HepG2 (cell line): ENCODE measurements at regions of chr15 and their contacts with region 1.

Region 1: GRCh38 chr15:37045859-37046740 is 54.2 kb downstream of the MEIS2 start:
- DNase-seq: peak; percentile 56
- ATAC-seq: peak; percentile 96
- H3K4me3 ChIP-seq: peak overlapping the region in 2 of 3 experiments; percentile 22 to 30; a peak in 2 of 6 replicates
- H3K27ac ChIP-seq: peak overlapping the region; percentile 44
- H3K4me1 ChIP-seq: peaks cover 51% of the 10 kb centered on the region
- H3K27me3 ChIP-seq: no peaks in the 10 kb centered on the region
- CTCF ChIP-seq: no peak
- EP300 ChIP-seq: no peak
- POLR2A ChIP-seq: no peak
- RAD21 ChIP-seq: no peak

Region 2: DNA sequence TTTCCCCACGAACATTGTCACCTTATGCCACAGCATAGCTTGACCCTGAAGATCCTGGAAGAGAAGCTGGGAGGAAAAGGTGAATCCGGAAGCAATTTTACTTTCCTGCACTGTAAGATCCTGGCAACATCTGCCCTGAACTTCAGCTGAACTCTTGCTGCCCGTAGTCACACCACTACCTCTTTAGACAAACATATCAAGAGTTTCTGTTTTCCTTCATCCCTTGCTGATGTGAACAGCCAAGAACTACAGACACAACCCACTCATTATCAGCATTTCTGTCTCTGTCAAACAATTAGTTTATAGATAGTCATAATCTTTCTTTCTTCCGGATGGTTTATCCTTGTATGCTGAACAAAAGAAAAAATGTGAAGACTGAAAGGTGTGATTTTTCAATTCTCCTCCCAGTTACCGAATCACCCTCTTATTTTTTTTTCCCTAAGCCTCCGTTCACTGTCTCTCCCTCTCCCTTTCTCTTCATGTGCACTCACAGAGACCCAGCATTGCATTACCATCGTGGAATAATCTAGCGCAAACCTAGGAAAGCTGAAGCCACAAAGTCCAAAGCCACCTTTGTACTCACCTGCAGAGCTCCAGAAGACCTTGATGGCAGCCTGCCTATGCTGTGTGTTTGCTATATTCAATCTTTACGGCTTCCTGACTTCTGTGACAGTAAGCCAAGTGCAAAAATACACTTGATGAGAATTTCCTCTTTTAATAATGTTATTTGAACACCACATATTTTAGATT is 237.5 kb before region 1 on chr15:
- CTCF ChIA-PET with region 1: no interaction called
- POLR2A ChIA-PET with region 1: no interaction called
- in situ Hi-C with region 1: no loop called
- intact Hi-C with region 1: no loop called
- DNase-seq: peak; percentile 3
- ATAC-seq: no peak
- H3K4me3 ChIP-seq: no peak overlapping the region
- H3K27ac ChIP-seq: no peak overlapping the region
- H3K4me1 ChIP-seq: no peaks in the 10 kb centered on the region
- H3K27me3 ChIP-seq: no peaks in the 10 kb centered on the region
- CTCF ChIP-seq: no peak
- EP300 ChIP-seq: no peak
- POLR2A ChIP-seq: no peak
- RAD21 ChIP-seq: no peak

Region 3: DNA sequence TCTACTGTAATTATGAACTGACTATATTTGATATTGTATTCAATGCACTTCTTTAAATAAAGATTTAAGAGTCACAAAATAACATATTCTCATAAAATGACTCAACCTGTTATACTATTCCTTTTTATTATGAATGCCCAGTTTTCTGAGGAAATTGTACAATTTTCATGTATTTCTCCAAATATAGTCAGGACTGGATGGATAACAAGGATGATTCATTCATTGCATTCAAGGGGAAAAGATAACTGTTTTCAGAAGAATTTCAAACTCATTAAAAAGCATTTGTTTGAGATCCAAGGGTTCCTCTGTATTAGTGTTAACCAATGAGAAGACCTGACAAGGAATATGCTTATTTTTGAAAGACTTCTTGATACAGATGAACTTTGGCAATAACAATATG is 109.5 kb before region 1 on chr15:
- CTCF ChIA-PET with region 1: no interaction called
- POLR2A ChIA-PET with region 1: no interaction called
- in situ Hi-C with region 1: no loop called
- intact Hi-C with region 1: loop called (anchors 10 kb)
- DNase-seq: no peak
- ATAC-seq: no peak
- H3K4me3 ChIP-seq: no peak overlapping the region
- H3K27ac ChIP-seq: no peak overlapping the region
- H3K4me1 ChIP-seq: peaks cover 31% of the 10 kb centered on the region
- H3K27me3 ChIP-seq: no peaks in the 10 kb centered on the region
- CTCF ChIP-seq: no peak
- EP300 ChIP-seq: no peak
- POLR2A ChIP-seq: no peak
- RAD21 ChIP-seq: no peak

Region 4: DNA sequence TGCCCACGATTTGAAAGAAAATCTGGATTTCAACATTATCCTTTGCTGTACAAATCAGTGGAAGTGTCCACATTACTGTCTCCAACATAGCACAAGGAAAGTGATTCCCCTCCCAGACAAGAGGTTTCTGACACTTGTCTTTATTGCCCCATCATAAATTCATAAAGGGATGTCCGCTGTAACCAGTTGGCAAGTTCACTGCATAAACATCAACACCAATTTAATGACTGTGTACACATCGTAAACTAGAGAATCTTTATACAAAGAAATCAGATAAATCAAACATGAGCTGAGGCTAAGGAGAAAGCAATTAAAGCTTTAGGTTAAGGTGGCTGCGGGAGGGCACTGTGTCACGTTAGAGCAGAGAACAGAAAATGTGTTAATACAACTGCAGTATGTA is 75.6 kb before region 1 on chr15:
- CTCF ChIA-PET with region 1: no interaction called
- POLR2A ChIA-PET with region 1: no interaction called
- in situ Hi-C with region 1: no loop called
- intact Hi-C with region 1: loop called (anchors 10 kb)
- DNase-seq: no peak
- ATAC-seq: no peak
- H3K4me3 ChIP-seq: no peak overlapping the region
- H3K27ac ChIP-seq: no peak overlapping the region
- H3K4me1 ChIP-seq: no peaks in the 10 kb centered on the region
- H3K27me3 ChIP-seq: no peaks in the 10 kb centered on the region
- CTCF ChIP-seq: no peak
- EP300 ChIP-seq: no peak
- POLR2A ChIP-seq: no peak
- RAD21 ChIP-seq: no peak

Region 5: DNA sequence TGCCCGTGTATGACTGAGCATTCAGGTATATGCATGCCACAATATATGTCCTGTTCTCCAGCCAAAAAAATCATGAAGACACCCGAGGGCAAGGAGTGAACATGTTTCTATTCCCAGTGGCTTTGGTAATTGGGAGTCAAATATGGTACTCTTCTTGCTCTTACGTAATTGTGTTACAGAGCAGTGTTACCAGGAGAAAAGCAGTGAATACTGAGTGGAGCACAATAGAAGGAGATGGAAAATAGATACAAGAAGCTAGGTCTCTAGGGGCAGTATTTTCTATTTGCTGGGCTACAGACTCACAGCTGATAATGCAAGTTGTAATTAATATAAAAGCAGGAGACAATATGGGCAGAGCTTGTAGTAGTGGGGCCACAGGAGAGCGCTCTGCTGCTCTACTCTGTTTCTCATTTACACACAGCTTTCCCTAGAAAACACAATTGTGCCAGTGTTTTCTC is 41.1 kb after region 1 on chr15:
- CTCF ChIA-PET with region 1: no interaction called
- POLR2A ChIA-PET with region 1: no interaction called
- in situ Hi-C with region 1: loop called (anchors 10 kb)
- intact Hi-C with region 1: loop called (anchors 5 kb)
- DNase-seq: no peak
- ATAC-seq: no peak
- H3K4me3 ChIP-seq: no peak overlapping the region
- H3K27ac ChIP-seq: no peak overlapping the region
- H3K4me1 ChIP-seq: peaks cover 46% of the 10 kb centered on the region
- H3K27me3 ChIP-seq: no peaks in the 10 kb centered on the region
- CTCF ChIP-seq: no peak
- EP300 ChIP-seq: no peak
- POLR2A ChIP-seq: no peak
- RAD21 ChIP-seq: no peak